ENCODE measurements at regions of chr19 and their contacts with region 1.

Region 1: DNA sequence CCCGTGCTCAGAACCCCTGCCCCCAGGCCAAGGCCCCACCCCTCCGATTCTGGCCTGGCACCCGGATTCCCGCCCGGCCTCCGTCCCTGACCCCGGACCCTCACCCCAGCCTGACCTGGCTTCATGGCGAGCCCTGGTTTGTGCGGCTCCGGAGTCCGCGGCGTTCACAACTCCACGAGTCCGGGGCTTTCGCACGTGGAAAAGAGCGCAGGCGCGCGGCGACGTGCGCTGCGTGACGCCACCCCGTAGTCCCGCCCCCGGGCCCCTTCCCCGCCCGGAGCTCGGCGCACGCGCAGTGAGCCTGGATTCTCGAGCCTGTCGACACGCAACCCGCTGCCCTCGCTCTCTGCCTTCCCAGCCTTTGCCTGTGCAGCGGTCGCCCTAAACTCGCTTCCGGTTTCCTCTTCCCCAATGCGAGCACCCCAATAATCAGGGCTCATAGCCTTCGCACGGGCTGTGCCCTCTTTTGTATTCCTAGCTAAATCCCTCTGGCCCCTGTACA is at the start of gene FBL:
- H3K4me3 Mint-ChIP-seq: peak within 1 kb of the TSS; percentile 87
- H3K27ac Mint-ChIP-seq: peak within 1 kb of the TSS; percentile 86
- H3K4me1 Mint-ChIP-seq: peaks cover 46% of the 10 kb centered on the region
- H3K27me3 Mint-ChIP-seq: peaks cover 8% of the 10 kb centered on the region

Region 2: DNA sequence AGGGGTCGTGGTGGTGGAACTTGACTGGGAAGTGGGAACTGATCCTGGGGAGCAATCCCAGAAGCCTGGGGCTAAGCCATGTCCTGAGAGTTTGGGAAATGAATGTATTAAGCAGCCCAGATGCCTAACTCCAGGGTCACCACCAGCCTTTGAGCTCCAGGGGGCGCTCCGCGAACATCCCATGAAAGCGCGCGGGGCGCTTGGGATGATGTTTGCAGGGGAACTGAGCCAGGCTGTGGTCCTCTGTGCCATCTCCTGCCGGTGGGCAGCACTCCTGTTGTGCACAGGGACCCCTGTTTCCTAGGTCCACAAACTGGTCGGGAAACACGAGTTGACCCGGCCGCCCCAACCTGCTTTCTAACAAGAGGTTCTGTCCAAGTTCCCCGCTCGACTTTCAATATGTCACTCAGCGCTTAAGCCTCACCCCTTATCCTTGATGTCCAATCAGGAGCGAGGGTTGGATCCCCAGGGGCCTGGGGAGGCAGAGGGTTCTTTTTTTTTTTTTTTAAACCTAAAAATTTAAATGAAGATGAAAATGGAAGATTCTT is 53.2 kb before region 1 on chr19:
- intact Hi-C with region 1: loop called (anchors 1 kb)
- H3K4me3 Mint-ChIP-seq: peak overlapping the region; percentile 74
- H3K27ac Mint-ChIP-seq: no peak overlapping the region
- H3K4me1 Mint-ChIP-seq: no peaks in the 10 kb centered on the region
- H3K27me3 Mint-ChIP-seq: peaks cover 19% of the 10 kb centered on the region

Region 3: GRCh38 chr19:40798223-40798996 is 952.2 kb after region 1 on chr19:
- intact Hi-C with region 1: loop called (anchors 10 kb)
- H3K4me3 Mint-ChIP-seq: peak overlapping the region; percentile 87
- H3K27ac Mint-ChIP-seq: peak overlapping the region; percentile 93
- H3K4me1 Mint-ChIP-seq: peaks cover 64% of the 10 kb centered on the region
- H3K27me3 Mint-ChIP-seq: no peaks in the 10 kb centered on the region